ENCODE measurements at regions of chr6 and their contacts with region 1.

Region 1: DNA sequence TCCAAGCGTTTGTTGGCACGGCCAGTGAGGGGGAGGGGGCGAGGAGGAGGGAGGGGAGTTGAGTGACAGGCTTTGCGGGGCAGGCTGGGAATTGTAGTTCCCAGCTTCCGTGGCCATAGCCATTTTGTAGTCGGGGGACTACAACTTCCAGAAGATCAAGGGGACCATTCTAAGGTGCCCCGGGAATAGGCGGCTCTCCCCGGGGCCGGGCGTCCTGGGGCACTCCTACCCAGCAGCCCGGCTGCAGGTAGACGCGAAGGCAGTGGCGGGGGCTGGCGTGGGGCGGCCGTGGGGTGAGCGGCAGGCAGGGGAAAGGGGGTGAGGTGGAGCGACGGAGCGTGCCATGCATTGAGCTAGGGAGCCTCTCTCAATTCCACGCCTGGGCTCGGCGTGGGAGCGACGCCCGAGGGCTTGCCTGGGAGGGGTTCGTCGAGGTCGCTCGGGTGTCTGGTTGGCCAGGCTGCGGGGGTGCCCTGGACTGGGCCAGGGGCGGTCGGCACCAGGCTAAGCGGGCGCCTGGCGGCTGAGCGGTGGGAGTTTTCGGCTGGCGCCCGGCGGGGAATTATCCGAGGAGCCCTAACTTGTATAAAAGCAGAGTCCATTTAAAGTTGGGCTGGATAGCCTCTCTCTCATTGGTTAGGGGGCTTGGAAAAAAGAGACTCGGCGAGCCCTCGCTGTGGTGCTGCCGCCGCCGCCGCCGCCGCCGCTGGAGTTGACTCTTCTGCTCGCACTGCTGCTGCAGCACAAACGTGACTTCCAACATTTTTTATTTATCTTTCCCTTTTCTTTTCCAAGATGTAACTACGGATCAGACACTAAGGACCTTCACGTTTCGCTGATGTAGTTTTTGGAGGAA is at the start of gene JARID2:
- DNase-seq: peak; percentile 88 to 96
- ATAC-seq: peak; percentile 53 to 78 (median 62)
- H3K4me3 ChIP-seq: peak within 1 kb of the TSS; percentile 85
- H3K4me3 Mint-ChIP-seq: peak within 1 kb of the TSS; percentile 100
- H3K27ac ChIP-seq: peak within 1 kb of the TSS; percentile 88
- H3K27ac Mint-ChIP-seq: peak within 1 kb of the TSS; percentile 93 to 99
- H3K4me1 ChIP-seq: peaks cover 14% of the 10 kb centered on the region
- H3K4me1 Mint-ChIP-seq: peaks cover 39 to 41% of the 10 kb centered on the region in 2 donors
- H3K27me3 ChIP-seq: no peaks in the 10 kb centered on the region
- H3K27me3 Mint-ChIP-seq: no peaks in the 10 kb centered on the region
- CTCF ChIP-seq: no peak
- total RNA-seq, gene JARID2: 49.9 to 60.9 (median 60.5) TPM

Region 2: DNA sequence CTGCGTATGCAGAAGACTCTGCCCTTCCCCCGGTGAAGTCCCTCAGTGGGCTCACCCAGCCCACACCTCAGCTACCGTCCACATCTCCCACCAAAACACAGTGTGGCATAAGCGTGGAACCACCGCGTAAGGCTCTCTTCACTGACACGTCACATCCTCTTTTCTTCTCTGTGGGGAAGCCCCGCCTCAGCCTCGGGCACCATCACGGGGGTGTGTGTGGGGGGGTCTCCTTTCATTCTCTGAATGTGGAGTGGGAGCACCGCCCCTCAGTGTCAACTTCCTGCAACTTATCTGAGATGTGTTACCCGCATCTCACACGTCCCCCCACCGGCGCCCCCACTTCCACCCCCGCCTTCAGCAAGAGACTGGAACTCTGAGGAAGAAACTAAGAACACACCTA is 388.1 kb before region 1 on chr6:
- intact Hi-C with region 1: loop called (anchors 5 kb)
- DNase-seq: peak; percentile 88 to 92
- ATAC-seq: peak; percentile 94 to 98 (median 95)
- H3K4me3 ChIP-seq: peak overlapping the region; percentile 4
- H3K4me3 Mint-ChIP-seq: peak overlapping the region; percentile 94
- H3K27ac ChIP-seq: peak overlapping the region; percentile 78
- H3K27ac Mint-ChIP-seq: peak overlapping the region; percentile 100
- H3K4me1 ChIP-seq: peaks cover 36% of the 10 kb centered on the region
- H3K4me1 Mint-ChIP-seq: peaks cover 52 to 65% of the 10 kb centered on the region in 2 donors
- H3K27me3 ChIP-seq: no peaks in the 10 kb centered on the region
- H3K27me3 Mint-ChIP-seq: no peaks in the 10 kb centered on the region
- CTCF ChIP-seq: no peak

Region 3: DNA sequence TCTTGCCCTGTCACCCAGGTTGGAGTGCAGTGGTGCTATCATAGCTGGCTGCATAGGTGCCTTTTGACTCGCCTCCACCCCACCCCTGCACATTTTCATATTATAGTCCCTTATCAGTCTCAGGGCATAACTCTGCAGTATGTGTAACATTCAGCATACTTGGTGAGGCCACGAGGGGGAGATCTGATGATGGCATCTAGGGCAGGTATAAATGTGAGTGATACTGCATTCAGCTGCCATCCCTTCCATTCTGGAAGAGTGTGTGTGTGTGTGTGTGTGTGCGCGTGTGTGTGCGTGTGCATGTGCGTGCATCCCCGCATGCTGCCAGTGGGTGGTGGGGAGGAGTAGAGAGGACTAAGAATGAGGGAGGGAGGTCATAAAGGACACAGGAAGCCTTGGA is 81.7 kb after region 1 on chr6:
- intact Hi-C with region 1: loop called (anchors 1 kb)
- DNase-seq: peak in 1 of 2 donors; percentile 67
- ATAC-seq: peak; percentile 39 to 44 (median 40)
- H3K4me3 ChIP-seq: no peak overlapping the region
- H3K4me3 Mint-ChIP-seq: peak overlapping the region; percentile 73
- H3K27ac ChIP-seq: peak overlapping the region; percentile 9
- H3K27ac Mint-ChIP-seq: peak overlapping the region; percentile 78 to 85
- H3K4me1 ChIP-seq: peaks cover 52% of the 10 kb centered on the region
- H3K4me1 Mint-ChIP-seq: peaks cover 82 to 90% of the 10 kb centered on the region in 2 donors
- H3K27me3 ChIP-seq: no peaks in the 10 kb centered on the region
- H3K27me3 Mint-ChIP-seq: no peaks in the 10 kb centered on the region
- CTCF ChIP-seq: peak; percentile 32

Region 4: GRCh38 chr6:15441215-15441868 is 195.8 kb after region 1 on chr6:
- intact Hi-C with region 1: loop called (anchors 2 kb)
- DNase-seq: peak in 1 of 2 donors; percentile 75
- ATAC-seq: peak; percentile 49 to 72 (median 60)
- H3K4me3 ChIP-seq: no peak overlapping the region
- H3K4me3 Mint-ChIP-seq: no peak overlapping the region
- H3K27ac ChIP-seq: no peak overlapping the region
- H3K27ac Mint-ChIP-seq: peak overlapping the region; percentile 68 to 88
- H3K4me1 ChIP-seq: peaks cover 39% of the 10 kb centered on the region
- H3K4me1 Mint-ChIP-seq: peaks cover 85 to 87% of the 10 kb centered on the region in 2 donors
- H3K27me3 ChIP-seq: no peaks in the 10 kb centered on the region
- H3K27me3 Mint-ChIP-seq: no peaks in the 10 kb centered on the region
- CTCF ChIP-seq: peak; percentile 81

Region 5: DNA sequence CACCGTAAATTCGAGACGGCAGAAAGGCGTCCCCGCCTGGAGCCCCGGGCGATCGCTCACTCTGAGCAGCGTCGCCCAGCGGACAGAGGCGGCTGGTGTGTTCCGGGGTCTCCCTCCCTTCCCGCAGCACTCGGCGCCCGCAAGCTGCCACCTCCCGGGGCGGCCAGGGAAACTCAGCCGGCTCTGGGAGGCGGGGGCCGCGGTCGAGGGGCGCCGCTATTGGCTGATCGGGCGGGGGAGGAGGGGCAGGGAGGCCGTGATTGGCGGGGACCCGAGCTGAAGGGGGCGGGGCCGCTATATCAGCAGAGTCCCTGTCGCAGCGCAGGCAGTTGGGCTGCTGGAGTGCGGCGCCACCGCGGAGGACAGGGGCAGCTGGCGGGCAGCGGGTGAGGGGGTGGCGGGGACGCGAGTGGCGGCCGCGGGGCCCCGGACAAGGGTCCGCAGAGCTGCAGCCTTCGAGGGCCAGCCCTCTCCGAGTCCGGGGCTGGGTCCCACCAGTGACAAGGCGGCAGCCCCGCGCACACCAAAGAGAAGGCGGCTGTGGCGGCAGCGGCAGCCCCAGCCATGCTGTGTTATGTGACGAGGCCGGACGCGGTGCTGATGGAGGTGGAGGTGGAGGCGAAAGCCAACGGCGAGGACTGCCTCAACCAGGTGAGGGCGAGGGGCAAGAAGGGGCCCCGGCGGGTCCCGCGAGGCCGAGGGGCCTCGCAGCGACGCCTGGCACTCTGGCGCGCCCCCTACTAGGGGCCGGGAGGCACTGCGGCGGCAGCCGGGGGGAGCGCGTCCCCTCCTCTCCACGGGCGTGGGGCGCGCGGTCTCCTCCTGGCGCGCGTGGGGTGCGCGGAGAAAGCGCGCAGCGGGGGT is 883.4 kb after region 1 on chr6 and contains the start of gene MYLIP:
- intact Hi-C with region 1: loop called (anchors 2 kb)
- DNase-seq: peak; percentile 97 to 98
- ATAC-seq: peak; percentile 74 to 93 (median 83)
- H3K4me3 ChIP-seq: peak within 1 kb of the TSS; percentile 99
- H3K4me3 Mint-ChIP-seq: peak within 1 kb of the TSS; percentile 97
- H3K27ac ChIP-seq: peak within 1 kb of the TSS; percentile 96
- H3K27ac Mint-ChIP-seq: peak within 1 kb of the TSS; percentile 92
- H3K4me1 ChIP-seq: peaks cover 17% of the 10 kb centered on the region
- H3K4me1 Mint-ChIP-seq: peaks cover 43 to 60% of the 10 kb centered on the region in 2 donors
- H3K27me3 ChIP-seq: no peaks in the 10 kb centered on the region
- H3K27me3 Mint-ChIP-seq: no peaks in the 10 kb centered on the region
- CTCF ChIP-seq: peak; percentile 60
- total RNA-seq, gene MYLIP: 127 to 207 (median 150) TPM